ENCODE measurements at regions of chr6 and their contacts with region 1.

Region 1: DNA sequence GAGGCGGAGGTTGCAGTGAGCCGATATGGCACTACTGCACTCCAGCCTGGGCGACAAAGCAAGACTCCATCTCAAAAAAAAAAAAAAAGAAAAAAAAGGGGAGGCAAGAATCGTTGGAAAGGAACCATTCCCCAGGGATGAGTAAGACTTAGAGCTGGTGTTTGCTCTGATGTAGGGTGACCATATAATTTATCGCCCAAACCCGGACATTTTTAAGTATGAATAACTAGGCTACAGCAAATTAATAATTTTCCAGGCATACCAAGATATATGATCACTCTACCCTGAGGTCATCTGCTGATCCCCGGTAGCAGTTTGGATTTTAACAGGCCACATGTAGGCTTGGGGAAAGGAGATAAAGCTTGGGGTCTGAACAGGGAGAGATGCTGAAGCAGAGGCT is 260.9 kb downstream of the BTBD9 start:
- DNase-seq: no peak
- H3K4me3 ChIP-seq: no peak overlapping the region
- H3K27ac ChIP-seq: no peak overlapping the region
- H3K4me1 ChIP-seq: no peaks in the 10 kb centered on the region
- H3K27me3 ChIP-seq: no peaks in the 10 kb centered on the region
- CTCF ChIP-seq: no peak

Region 2: DNA sequence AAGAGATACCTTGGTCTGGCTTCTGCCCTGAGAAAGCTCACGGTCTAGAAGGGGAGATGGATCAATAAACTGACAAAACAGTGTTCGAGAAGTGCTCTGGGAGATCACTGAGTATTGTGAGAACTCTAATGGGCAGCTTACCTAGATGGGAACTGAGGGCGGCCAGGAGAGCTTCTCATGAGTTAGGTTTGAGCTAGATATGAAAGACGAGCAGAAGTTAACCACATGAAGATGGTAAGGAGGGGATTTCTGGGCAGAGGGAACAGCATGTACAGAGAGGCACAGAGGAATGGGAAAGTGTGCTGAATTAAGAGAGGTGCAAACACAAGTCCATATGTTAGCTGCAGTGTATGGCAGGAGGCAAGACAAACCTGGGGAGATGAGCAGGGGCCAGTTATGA is 547.3 kb before region 1 on chr6:
- CTCF ChIA-PET with region 1: interaction called, 11 read pairs
- POLR2A ChIA-PET with region 1: no interaction called
- intact Hi-C with region 1: no loop called
- DNase-seq: no peak
- H3K4me3 ChIP-seq: no peak overlapping the region
- H3K27ac ChIP-seq: no peak overlapping the region
- H3K4me1 ChIP-seq: peaks cover 48% of the 10 kb centered on the region
- H3K27me3 ChIP-seq: no peaks in the 10 kb centered on the region
- CTCF ChIP-seq: no peak

Region 3: DNA sequence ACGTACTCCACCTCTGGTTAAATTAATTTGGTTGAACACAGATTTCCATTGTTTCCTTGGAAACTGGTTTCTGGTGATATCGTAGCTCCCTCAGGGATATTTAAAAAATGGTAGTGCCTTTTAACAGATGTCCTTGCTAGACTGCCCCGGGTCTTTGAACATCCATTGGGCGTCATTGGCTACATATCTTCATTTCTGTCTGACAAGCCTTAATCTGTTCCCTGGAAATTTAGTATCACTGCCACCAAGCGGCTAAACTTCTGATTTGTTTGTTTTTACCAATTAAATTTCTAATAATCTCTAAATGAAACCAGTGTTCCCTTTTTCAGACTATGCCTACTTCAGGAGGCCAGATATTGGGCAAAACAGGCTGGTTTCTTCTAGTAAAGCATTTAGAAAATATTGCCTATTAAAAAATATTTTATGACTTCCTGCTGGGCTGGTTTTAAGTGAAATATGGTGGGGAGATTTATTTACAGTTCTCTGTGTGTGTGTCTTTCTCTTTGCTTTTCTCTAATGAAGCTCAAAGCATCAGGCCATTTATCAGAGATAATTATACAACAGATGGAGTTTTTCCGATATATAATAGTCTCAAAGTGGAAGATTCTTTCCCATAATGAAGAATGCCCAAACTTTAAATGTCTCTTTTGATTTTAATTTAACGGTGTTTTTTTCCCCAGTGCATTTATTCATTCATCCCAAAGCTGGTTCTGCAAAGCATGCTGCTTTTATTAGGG is 309.8 kb before region 1 on chr6:
- CTCF ChIA-PET with region 1: no interaction called
- POLR2A ChIA-PET with region 1: no interaction called
- intact Hi-C with region 1: no loop called
- DNase-seq: peak; percentile 41
- H3K4me3 ChIP-seq: no peak overlapping the region
- H3K27ac ChIP-seq: no peak overlapping the region
- H3K4me1 ChIP-seq: peaks cover 26% of the 10 kb centered on the region
- H3K27me3 ChIP-seq: no peaks in the 10 kb centered on the region
- CTCF ChIP-seq: peak; percentile 47

Region 4: GRCh38 chr6:38302081-38302480 is 76.7 kb before region 1 on chr6:
- CTCF ChIA-PET with region 1: no interaction called
- POLR2A ChIA-PET with region 1: no interaction called
- intact Hi-C with region 1: no loop called
- DNase-seq: no peak
- H3K4me3 ChIP-seq: no peak overlapping the region
- H3K27ac ChIP-seq: no peak overlapping the region
- H3K4me1 ChIP-seq: no peaks in the 10 kb centered on the region
- H3K27me3 ChIP-seq: no peaks in the 10 kb centered on the region
- CTCF ChIP-seq: no peak

Measured in A673 (cell line).